ENCODE measurements at regions of chr17 and their contacts with region 1.

Region 1: DNA sequence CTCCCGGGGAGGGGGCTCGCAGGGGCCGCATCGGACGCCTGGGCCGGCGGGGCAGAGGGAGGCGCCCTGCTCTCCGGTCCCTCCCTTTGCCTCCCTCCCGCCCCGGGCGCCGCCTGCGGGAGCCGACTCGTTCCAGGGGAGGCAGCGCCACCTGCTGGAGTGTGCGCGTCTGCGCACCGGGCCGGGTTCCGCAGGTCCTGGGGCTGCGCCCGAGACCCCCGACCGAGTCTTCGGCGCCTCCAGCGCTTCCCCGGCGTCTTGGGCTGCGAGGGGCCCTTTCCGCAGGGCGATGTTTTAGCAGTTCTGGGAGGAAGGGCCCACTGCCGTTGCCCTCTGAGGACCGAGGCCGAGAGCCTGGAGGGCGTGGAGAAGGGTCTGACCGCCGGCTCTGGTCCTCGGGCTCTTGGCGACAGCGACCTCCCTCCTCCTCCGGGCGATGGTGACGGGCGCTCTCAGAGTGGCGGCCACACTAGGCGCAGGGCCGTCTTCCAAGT is 106.3 kb downstream of the SEC14L1 start:
- DNase-seq: peak; percentile 80 to 92
- H3K4me3 ChIP-seq: peak overlapping the region; percentile 64
- H3K4me3 Mint-ChIP-seq: peak overlapping the region; percentile 64
- H3K27ac Mint-ChIP-seq: peak overlapping the region; percentile 10
- H3K4me1 ChIP-seq: peaks cover 9% of the 10 kb centered on the region
- H3K4me1 Mint-ChIP-seq: no peaks in the 10 kb centered on the region
- H3K27me3 ChIP-seq: no peaks in the 10 kb centered on the region
- H3K27me3 Mint-ChIP-seq: peaks cover 3% of the 10 kb centered on the region
- CTCF ChIP-seq: peak; percentile 92 to 98

Region 2: DNA sequence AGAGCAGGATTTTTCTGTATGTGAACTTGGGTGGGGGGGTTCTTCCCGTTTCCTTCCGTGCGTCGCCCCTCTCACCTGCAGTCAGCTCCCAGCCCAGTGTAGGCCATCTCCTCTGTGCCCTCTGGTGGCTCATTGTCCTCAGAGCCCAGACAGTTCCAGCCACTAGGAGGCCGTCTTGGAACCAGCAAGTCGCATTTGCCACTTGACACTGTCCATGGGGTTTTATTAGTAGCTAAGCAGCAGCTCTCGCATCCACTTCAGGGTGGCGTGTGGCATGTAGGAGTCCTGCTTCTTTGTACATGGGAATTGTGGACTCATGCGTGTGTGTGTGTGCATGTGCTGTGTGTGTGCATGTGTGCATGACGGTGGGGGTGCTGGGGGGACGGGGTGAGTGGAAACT is 32.4 kb before region 1 on chr17:
- CTCF ChIA-PET with region 1: interaction called, 3 read pairs
- POLR2A ChIA-PET with region 1: no interaction called
- intact Hi-C with region 1: loop called (anchors 2 kb)
- DNase-seq: peak; percentile 64 to 70
- H3K4me3 ChIP-seq: no peak overlapping the region
- H3K4me3 Mint-ChIP-seq: no peak overlapping the region
- H3K27ac Mint-ChIP-seq: no peak overlapping the region
- H3K4me1 ChIP-seq: no peaks in the 10 kb centered on the region
- H3K4me1 Mint-ChIP-seq: no peaks in the 10 kb centered on the region
- H3K27me3 ChIP-seq: no peaks in the 10 kb centered on the region
- H3K27me3 Mint-ChIP-seq: no peaks in the 10 kb centered on the region
- CTCF ChIP-seq: peak; percentile 52 to 96

Region 3: DNA sequence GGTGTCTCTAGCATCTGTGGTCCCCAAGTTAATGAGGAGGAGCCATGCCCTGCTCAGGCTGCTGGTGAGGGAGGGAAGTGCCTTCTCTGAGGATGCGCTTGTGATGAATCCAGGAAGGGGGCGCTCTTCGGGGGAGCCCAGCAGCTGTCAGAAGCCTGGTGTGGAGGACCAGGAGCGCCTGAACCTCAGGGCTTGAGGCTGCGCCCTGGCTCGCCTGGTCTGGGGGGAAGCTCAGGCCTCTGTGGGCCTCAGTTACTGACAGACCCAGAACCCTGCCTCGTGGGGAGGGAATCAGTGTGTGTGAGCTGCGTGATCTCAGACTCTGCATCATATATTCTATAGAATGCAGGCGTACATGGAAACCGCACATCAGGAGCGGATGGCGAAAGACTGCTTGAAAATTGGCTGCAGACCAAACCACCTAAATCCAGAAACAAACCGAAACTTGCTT is 19.8 kb after region 1 on chr17:
- CTCF ChIA-PET with region 1: no interaction called
- POLR2A ChIA-PET with region 1: no interaction called
- intact Hi-C with region 1: no loop called
- DNase-seq: no peak
- H3K4me3 ChIP-seq: no peak overlapping the region
- H3K4me3 Mint-ChIP-seq: no peak overlapping the region
- H3K27ac Mint-ChIP-seq: no peak overlapping the region
- H3K4me1 ChIP-seq: peaks cover 16% of the 10 kb centered on the region; the same call in 1 of the 2 replicates
- H3K4me1 Mint-ChIP-seq: peaks cover 26% of the 10 kb centered on the region
- H3K27me3 ChIP-seq: no peaks in the 10 kb centered on the region
- H3K27me3 Mint-ChIP-seq: no peaks in the 10 kb centered on the region
- CTCF ChIP-seq: peak in 1 of 2 experiments; percentile 25

Measured in Caco-2 (cell line).